CD4-positive, alpha-beta memory T cell (primary cell): ENCODE measurements at regions of chr9 and their contacts with region 1.

Region 1: DNA sequence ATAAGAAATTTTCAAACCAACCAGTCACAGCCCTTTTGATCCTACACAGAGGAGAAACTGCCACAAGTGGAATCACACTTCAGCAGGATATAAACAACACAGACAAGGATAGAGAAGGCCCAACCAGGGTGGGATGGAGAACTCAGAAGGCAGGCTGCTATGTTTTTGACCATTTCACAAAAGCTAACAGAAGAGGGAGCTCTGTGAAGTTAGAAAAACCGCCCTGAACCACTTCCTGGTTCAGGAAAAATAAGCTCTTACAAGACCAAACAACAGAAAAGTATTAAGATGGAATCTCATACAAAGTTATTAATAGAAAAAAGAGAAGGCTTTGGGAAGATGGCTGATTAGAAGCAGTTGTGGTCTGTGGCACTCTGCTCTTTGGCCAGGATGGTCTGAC is 975 bp upstream of the IFNB1 start:
- DNase-seq: peak in 2 of 5 donors; percentile 11 to 14
- H3K4me3 ChIP-seq: no peak overlapping the region
- H3K4me3 Mint-ChIP-seq: peak overlapping the region in 1 of 8 donors; percentile 37
- H3K27ac ChIP-seq: no peak overlapping the region
- H3K27ac Mint-ChIP-seq: peak overlapping the region in 2 of 7 donors; percentile 34 to 69
- H3K4me1 ChIP-seq: peaks cover 19% of the 10 kb centered on the region
- H3K4me1 Mint-ChIP-seq: peaks cover 13 to 40% (median 25%) of the 10 kb centered on the region in 4 donors
- H3K27me3 ChIP-seq: no peaks in the 10 kb centered on the region
- H3K27me3 Mint-ChIP-seq: peaks cover 0 to 3% of the 10 kb centered on the region in 2 donors

Region 2: DNA sequence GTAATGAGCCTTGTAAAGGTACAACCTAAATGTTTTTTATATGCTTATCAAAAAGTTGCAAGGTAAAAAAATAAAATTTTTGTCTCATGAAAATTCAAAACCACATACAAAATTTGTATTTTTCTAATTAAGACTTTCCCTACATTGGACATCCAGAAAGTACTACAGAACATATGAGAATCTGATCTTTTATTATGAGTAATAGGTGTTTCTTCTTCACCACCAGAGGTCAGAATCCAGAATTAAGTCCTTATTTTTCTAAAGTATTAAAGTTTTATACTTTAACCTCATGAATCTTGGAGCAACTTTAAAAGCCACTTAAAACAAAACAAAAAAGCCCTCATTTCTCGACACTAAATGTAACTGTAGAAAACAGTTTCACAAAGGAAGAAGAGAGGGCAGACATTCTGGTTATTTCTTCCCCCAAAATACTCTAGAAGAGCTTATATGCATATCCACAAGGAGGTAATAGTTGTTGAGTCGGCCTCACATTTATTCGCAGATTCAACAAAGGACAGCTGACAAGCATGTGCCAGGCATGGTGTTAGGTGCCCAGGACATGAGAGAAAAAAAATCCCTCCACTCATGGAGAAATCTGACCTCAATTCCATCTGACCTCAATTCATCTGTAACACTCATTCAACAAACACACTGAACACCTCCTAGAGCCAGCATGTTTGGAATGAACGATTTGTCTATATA is 525.7 kb before region 1 on chr9:
- CTCF ChIA-PET with region 1: no interaction called
- POLR2A ChIA-PET with region 1: no interaction called
- intact Hi-C with region 1: no loop called
- DNase-seq: peak in 2 of 5 donors; percentile 5 to 16
- H3K4me3 ChIP-seq: no peak overlapping the region
- H3K4me3 Mint-ChIP-seq: peak overlapping the region in 7 of 8 donors; percentile 0 to 48 (median 26)
- H3K27ac ChIP-seq: no peak overlapping the region
- H3K27ac Mint-ChIP-seq: peak overlapping the region in 4 of 7 donors; percentile 2 to 17 (median 6)
- H3K4me1 ChIP-seq: peaks cover 56% of the 10 kb centered on the region
- H3K4me1 Mint-ChIP-seq: peaks cover 54 to 72% (median 65%) of the 10 kb centered on the region in 4 donors
- H3K27me3 ChIP-seq: no peaks in the 10 kb centered on the region
- H3K27me3 Mint-ChIP-seq: no peaks in the 10 kb centered on the region

Region 3: GRCh38 chr9:21016701-21017491 is 61.8 kb before region 1 on chr9:
- CTCF ChIA-PET with region 1: no interaction called
- POLR2A ChIA-PET with region 1: no interaction called
- intact Hi-C with region 1: no loop called
- DNase-seq: no peak
- H3K4me3 ChIP-seq: no peak overlapping the region
- H3K4me3 Mint-ChIP-seq: no peak overlapping the region
- H3K27ac ChIP-seq: no peak overlapping the region
- H3K27ac Mint-ChIP-seq: peak overlapping the region in 1 of 7 donors; percentile 13
- H3K4me1 ChIP-seq: no peaks in the 10 kb centered on the region
- H3K4me1 Mint-ChIP-seq: peaks cover 12 to 25% (median 18%) of the 10 kb centered on the region in 4 donors
- H3K27me3 ChIP-seq: no peaks in the 10 kb centered on the region
- H3K27me3 Mint-ChIP-seq: no peaks in the 10 kb centered on the region

Region 4: DNA sequence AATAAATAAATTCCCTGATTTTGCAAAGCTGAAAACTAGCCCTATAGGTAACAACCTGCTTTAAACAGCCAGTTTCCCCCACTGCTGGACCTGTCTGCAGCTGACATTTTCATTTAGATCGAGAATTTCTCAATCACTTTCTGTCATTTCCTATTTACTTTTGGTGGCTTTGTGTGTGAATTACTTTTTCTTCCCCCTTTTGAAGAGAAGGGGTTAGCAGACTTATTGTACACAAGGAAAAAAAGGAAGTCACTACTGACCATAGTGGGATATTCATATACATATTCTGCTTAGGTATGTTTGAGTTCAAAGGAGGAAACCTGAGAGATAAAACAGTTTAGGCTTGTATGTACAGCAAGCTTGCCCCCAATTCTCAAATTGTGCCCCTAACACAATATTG is 26.1 kb after region 1 on chr9:
- CTCF ChIA-PET with region 1: interaction called, 53 read pairs
- POLR2A ChIA-PET with region 1: interaction called, 6 read pairs
- intact Hi-C with region 1: no loop called
- DNase-seq: no peak
- H3K4me3 ChIP-seq: no peak overlapping the region
- H3K4me3 Mint-ChIP-seq: no peak overlapping the region
- H3K27ac ChIP-seq: no peak overlapping the region
- H3K27ac Mint-ChIP-seq: peak overlapping the region in 1 of 7 donors; percentile 5
- H3K4me1 ChIP-seq: peaks cover 8% of the 10 kb centered on the region
- H3K4me1 Mint-ChIP-seq: peaks cover 4 to 10% (median 8%) of the 10 kb centered on the region in 4 donors
- H3K27me3 ChIP-seq: no peaks in the 10 kb centered on the region
- H3K27me3 Mint-ChIP-seq: peaks cover 0 to 3% of the 10 kb centered on the region in 2 donors